Right lobe of liver (tissue), 6 donors: ENCODE measurements at regions of chr1 and their contacts with region 1.

Region 1: GRCh38 chr1:205485338-205486228 is 18.9 kb upstream of the CDK18 start:
- DNase-seq: peak; percentile 57 to 74 (median 71)
- ATAC-seq: peak; percentile 89 to 94 (median 92)
- H3K4me3 ChIP-seq: no peak overlapping the region
- H3K27ac ChIP-seq: no peak overlapping the region
- H3K4me1 ChIP-seq: no peaks in the 10 kb centered on the region
- H3K27me3 ChIP-seq: no peaks in the 10 kb centered on the region
- CTCF ChIP-seq: peak; percentile 87 to 96 (median 92)
- POLR2A ChIP-seq: no peak

Region 2: GRCh38 chr1:205344066-205344928 is 141.3 kb before region 1 on chr1:
- intact Hi-C with region 1: loop called in 1 of 2 experiments (anchors 10 kb)
- DNase-seq: peak in 1 of 3 donors; percentile 37
- ATAC-seq: peak; percentile 56 to 60 (median 56)
- H3K4me3 ChIP-seq: peak overlapping the region in 2 of 3 donors; percentile 8 to 20
- H3K27ac ChIP-seq: no peak overlapping the region
- H3K4me1 ChIP-seq: peaks cover 0 to 12% (median 4%) of the 10 kb centered on the region in 4 donors
- H3K27me3 ChIP-seq: peaks cover 0 to 16% of the 10 kb centered on the region in 2 donors
- CTCF ChIP-seq: no peak
- POLR2A ChIP-seq: no peak

Region 3: DNA sequence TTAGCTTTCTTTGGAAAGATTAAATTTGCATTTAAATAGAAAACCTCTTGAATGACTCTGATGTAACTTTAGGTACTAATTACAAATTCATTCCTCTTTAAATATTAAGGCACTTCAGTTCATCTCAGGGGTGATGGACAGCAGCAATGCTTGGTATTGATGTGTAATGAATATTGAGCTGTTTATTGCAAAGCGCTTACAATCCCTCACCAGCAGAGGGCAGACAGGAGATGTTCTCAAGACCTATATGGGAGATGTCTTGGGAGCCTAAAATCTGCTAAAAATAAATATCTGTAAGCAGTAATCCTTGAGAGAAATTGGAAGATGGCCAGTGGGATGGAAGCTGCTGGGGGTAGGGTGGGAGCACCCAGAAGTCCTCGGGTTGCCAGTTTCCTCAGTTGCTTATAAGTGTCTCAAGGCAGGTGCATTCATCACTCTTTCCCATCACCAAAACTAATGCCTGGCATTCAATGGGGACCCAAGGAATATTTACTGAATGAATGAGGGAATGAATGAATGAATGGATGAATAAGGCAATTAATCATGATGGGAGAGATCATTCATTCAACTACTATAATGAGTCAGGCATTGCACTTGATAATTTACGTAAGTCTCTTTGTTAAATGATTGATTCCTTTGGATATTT is 131.2 kb before region 1 on chr1:
- intact Hi-C with region 1: loop called (anchors 10 kb)
- DNase-seq: no peak
- ATAC-seq: peak; percentile 69 to 84 (median 78)
- H3K4me3 ChIP-seq: no peak overlapping the region
- H3K27ac ChIP-seq: no peak overlapping the region
- H3K4me1 ChIP-seq: no peaks in the 10 kb centered on the region
- H3K27me3 ChIP-seq: no peaks in the 10 kb centered on the region
- CTCF ChIP-seq: peak; percentile 72 to 84 (median 80)
- POLR2A ChIP-seq: no peak

Region 4: GRCh38 chr1:205523891-205524793 is 38.6 kb after region 1 on chr1:
- intact Hi-C with region 1: loop called (anchors 5 kb)
- DNase-seq: peak; percentile 68 to 80 (median 72)
- ATAC-seq: peak; percentile 70 to 81 (median 76)
- H3K4me3 ChIP-seq: no peak overlapping the region
- H3K27ac ChIP-seq: no peak overlapping the region
- H3K4me1 ChIP-seq: no peaks in the 10 kb centered on the region
- H3K27me3 ChIP-seq: no peaks in the 10 kb centered on the region
- CTCF ChIP-seq: peak; percentile 77 to 83 (median 79)
- POLR2A ChIP-seq: no peak